Activated B cell treated with CpG ODN at 0.5 μM for 24 hours (primary cell): ENCODE measurements at regions of chr20 and their contacts with region 1.

Region 1: DNA sequence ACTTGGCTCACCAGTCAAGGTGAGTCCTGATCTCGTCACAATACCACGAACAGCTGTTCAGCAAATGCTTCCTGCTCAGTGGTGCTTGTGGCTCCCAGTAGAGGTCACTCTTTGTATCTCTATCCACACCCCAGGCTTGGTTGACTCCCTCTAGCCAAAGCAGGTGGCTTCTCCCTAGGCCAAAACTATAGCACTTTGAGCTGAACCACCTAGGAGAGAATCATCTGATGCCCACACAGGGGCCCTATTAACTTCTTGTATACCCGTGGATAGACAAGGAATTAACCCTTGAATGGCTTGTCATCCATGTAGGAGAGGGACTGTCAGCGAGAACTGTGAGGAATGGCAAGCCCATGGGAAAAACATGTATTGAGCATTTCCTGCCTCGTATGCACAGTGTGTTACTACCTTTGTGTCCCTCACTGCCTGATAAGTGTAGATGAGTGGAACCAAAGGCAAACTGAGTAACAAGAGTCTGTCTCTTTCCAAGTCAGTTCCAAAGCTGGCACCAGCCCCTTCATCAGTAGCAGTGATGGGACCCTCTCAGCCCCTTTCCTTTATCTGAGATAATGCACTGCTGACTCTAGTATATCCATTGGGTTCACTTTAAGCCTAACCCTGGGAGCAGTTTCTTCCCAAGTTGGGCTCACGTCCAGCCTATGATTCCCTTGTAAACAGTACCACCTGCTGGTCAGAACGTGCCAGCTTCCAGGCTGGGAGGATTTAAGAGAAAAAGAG is 42.5 kb downstream of the EIF2S2 start:
- DNase-seq: no peak
- ATAC-seq: peak; percentile 89
- H3K4me3 Mint-ChIP-seq: no peak overlapping the region
- H3K27ac Mint-ChIP-seq: peak overlapping the region; percentile 61
- H3K4me1 Mint-ChIP-seq: peaks cover 24% of the 10 kb centered on the region
- H3K27me3 Mint-ChIP-seq: no peaks in the 10 kb centered on the region
- CTCF ChIP-seq: peak; percentile 36

Region 2: DNA sequence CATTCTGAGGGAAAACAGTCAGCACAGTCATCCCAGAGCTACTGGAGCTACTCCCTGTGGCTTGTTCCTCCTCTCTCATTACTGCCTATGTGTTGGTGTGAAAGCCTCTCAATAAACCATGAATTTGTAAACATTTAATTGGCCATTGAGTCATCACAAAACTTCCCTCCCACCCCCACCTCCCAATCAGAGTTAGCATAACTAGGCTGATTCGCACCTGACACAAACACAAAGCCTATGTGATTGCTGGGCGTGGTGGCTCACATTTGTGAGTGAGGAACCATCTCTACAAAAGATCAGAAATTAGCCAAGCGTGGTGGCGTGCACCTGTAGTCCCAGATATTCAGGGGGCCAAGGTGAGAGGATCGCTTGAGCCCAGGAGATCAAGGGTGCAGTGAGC is 608.8 kb before region 1 on chr20:
- CTCF ChIA-PET with region 1: no interaction called
- POLR2A ChIA-PET with region 1: no interaction called
- intact Hi-C with region 1: loop called (anchors 5 kb)
- DNase-seq: no peak
- ATAC-seq: no peak
- H3K4me3 Mint-ChIP-seq: no peak overlapping the region
- H3K27ac Mint-ChIP-seq: no peak overlapping the region
- H3K4me1 Mint-ChIP-seq: peaks cover 18% of the 10 kb centered on the region
- H3K27me3 Mint-ChIP-seq: no peaks in the 10 kb centered on the region
- CTCF ChIP-seq: no peak

Region 3: DNA sequence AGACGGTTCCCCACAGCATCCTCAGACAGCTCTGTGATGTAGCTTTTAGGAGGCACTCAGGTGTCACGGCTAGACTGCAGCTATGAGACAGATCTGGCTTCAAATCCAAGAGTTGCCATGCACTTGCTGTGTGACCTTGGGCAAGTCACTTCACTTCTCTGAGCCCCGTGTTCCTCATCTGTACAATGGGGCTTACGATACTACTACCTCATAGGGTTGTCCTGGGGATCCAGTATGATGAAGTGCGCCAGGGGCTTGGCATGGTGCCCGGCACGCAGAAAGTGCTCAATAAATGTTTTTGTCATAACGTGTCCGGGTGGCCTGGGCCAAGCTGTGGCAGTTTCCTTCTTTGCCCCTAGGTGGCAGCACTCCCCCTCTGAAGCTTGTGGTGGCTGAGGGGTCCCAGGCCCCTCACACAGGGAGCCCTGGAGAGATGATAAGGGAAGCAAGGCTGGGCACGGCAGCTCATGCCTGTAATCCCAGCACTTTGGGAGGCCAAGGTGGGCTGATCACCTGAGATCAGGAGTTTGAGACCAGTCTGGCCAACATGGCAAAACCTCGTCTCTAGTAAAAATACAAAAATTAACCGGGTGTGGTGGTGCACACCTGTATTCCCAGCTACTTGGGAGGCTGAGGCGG is 277.4 kb before region 1 on chr20:
- CTCF ChIA-PET with region 1: interaction called, 11 read pairs
- POLR2A ChIA-PET with region 1: no interaction called
- intact Hi-C with region 1: loop called (anchors 1 kb)
- DNase-seq: peak; percentile 55
- ATAC-seq: peak; percentile 90
- H3K4me3 Mint-ChIP-seq: no peak overlapping the region
- H3K27ac Mint-ChIP-seq: peak overlapping the region; percentile 35
- H3K4me1 Mint-ChIP-seq: peaks cover 16% of the 10 kb centered on the region
- H3K27me3 Mint-ChIP-seq: no peaks in the 10 kb centered on the region
- CTCF ChIP-seq: peak; percentile 56

Region 4: DNA sequence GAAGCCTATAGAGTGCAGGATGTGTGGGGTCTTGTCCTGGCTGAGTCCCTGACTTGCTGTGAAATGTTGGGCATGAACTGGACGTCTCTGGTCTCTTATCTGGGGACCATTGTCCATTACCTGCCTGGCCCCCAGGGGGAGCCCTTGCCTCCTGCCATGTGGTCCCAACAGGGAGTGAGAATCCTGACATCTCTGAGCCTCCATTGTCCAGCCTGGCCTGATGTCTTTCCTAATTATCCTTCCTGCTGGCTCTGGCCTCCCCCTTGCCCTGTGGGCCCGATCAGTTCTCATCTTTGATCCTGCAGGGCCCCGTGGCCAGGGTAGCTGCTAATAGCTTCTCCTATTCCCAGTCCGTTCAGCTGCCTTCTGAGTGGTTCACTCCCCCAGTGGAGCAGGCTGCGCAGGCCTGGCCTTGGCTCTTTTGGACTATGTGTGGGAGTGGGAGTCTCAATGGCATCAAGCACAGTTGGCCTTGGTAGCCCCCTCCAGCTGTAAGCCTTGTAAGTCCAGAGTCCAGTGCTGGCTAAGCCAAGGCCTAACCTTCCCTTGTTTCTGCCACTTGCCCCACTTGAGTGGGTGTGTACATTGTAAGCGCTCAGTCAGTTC is 153.7 kb before region 1 on chr20:
- CTCF ChIA-PET with region 1: interaction called, 27 read pairs
- POLR2A ChIA-PET with region 1: interaction called, 5 read pairs
- intact Hi-C with region 1: loop called (anchors 1 kb)
- DNase-seq: peak; percentile 38
- ATAC-seq: peak; percentile 52
- H3K4me3 Mint-ChIP-seq: no peak overlapping the region
- H3K27ac Mint-ChIP-seq: no peak overlapping the region
- H3K4me1 Mint-ChIP-seq: peaks cover 15% of the 10 kb centered on the region
- H3K27me3 Mint-ChIP-seq: no peaks in the 10 kb centered on the region
- CTCF ChIP-seq: no peak

Region 5: GRCh38 chr20:34037121-34037520 is 32.4 kb before region 1 on chr20:
- CTCF ChIA-PET with region 1: no interaction called
- POLR2A ChIA-PET with region 1: no interaction called
- intact Hi-C with region 1: no loop called
- DNase-seq: no peak
- ATAC-seq: peak; percentile 31
- H3K4me3 Mint-ChIP-seq: no peak overlapping the region
- H3K27ac Mint-ChIP-seq: no peak overlapping the region
- H3K4me1 Mint-ChIP-seq: peaks cover 59% of the 10 kb centered on the region
- H3K27me3 Mint-ChIP-seq: no peaks in the 10 kb centered on the region
- CTCF ChIP-seq: no peak

Region 6: DNA sequence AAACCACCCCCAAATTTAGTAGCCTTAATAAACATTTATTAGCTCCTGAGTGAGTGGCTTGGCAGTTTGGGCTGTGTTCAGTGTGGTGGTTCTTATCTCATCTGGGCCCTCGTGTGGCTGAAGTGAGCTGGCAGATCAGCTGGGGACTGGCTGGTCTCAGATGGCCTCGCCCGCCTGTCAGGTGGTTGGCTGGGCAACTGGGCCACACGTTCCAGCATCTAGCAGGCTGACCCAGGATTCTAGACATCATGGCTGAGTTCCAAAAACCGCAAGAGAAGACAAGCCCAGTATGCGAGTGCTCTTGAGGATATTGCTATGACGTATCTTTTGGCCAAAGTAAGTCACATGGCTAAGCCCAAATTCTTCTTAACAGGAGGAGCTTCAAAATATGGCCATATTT is 13.6 kb after region 1 on chr20:
- CTCF ChIA-PET with region 1: interaction called, 13 read pairs
- POLR2A ChIA-PET with region 1: no interaction called
- intact Hi-C with region 1: no loop called
- DNase-seq: no peak
- ATAC-seq: no peak
- H3K4me3 Mint-ChIP-seq: no peak overlapping the region
- H3K27ac Mint-ChIP-seq: no peak overlapping the region
- H3K4me1 Mint-ChIP-seq: peaks cover 10% of the 10 kb centered on the region
- H3K27me3 Mint-ChIP-seq: no peaks in the 10 kb centered on the region
- CTCF ChIP-seq: no peak